ENCODE measurements at regions of chr1 and their contacts with region 1.

Region 1: GRCh38 chr1:19872190-19872589 is 10.0 kb upstream of the OTUD3 start:
- DNase-seq: no peak
- ATAC-seq: peak; percentile 46
- H3K4me3 ChIP-seq: no peak overlapping the region
- H3K27ac ChIP-seq: no peak overlapping the region
- H3K4me1 ChIP-seq: peaks cover 0 to 2% of the 10 kb centered on the region in 2 experiments; a peak in 2 of 4 replicates
- H3K27me3 ChIP-seq: no peaks in the 10 kb centered on the region
- CTCF ChIP-seq: peak; percentile 1 to 30 (median 9); a peak in 1 of 6 replicates
- POLR2A ChIP-seq: no peak
- RAD21 ChIP-seq: peak; percentile 47

Region 2: GRCh38 chr1:19811206-19811851 is 60.9 kb before region 1 on chr1:
- CTCF ChIA-PET with region 1: no interaction called
- POLR2A ChIA-PET with region 1: no interaction called
- RAD21 ChIA-PET with region 1: no interaction called
- intact Hi-C with region 1: loop called (anchors 2 kb)
- DNase-seq: peak; percentile 34
- ATAC-seq: peak; percentile 94
- H3K4me3 ChIP-seq: no peak overlapping the region
- H3K27ac ChIP-seq: no peak overlapping the region
- H3K4me1 ChIP-seq: no peaks in the 10 kb centered on the region; a peak in 1 of 4 replicates
- H3K27me3 ChIP-seq: no peaks in the 10 kb centered on the region
- CTCF ChIP-seq: peak; percentile 64 to 75 (median 69); a peak in 5 of 6 replicates
- POLR2A ChIP-seq: no peak
- RAD21 ChIP-seq: peak; percentile 63

Region 3: GRCh38 chr1:19882111-19883071 is 10.2 kb after region 1 on chr1 and contains the start of gene OTUD3:
- CTCF ChIA-PET with region 1: interaction called, 14 read pairs
- POLR2A ChIA-PET with region 1: interaction called, 3 read pairs
- RAD21 ChIA-PET with region 1: no interaction called
- intact Hi-C with region 1: no loop called
- DNase-seq: peak; percentile 96
- ATAC-seq: peak; percentile 96
- H3K4me3 ChIP-seq: peak within 1 kb of the TSS; percentile 56 to 88
- H3K27ac ChIP-seq: peak within 1 kb of the TSS; percentile 78
- H3K4me1 ChIP-seq: peaks cover 9 to 18% of the 10 kb centered on the region in 2 experiments; a peak in 3 of 4 replicates
- H3K27me3 ChIP-seq: no peaks in the 10 kb centered on the region
- CTCF ChIP-seq: peak; percentile 77 to 90 (median 86)
- POLR2A ChIP-seq: peak; percentile 82
- RAD21 ChIP-seq: peak; percentile 88
- total RNA-seq, gene OTUD3: 15.0 TPM